GM12878 (cell line): ENCODE measurements at regions of chr4 and their contacts with region 1.

Region 1: GRCh38 chr4:106369456-106370060 is 980 bp upstream of the GIMD1 start:
- DNase-seq: peak; percentile 20
- ATAC-seq: peak; percentile 83
- H3K4me3 ChIP-seq: no peak overlapping the region
- H3K27ac ChIP-seq: no peak overlapping the region
- H3K4me1 ChIP-seq: no peaks in the 10 kb centered on the region
- H3K27me3 ChIP-seq: no peaks in the 10 kb centered on the region
- CTCF ChIP-seq: peak; percentile 50 to 58 (median 58)
- EP300 ChIP-seq: no peak
- POLR2A ChIP-seq: no peak
- RAD21 ChIP-seq: peak; percentile 69

Region 2: GRCh38 chr4:106266201-106266600 is 103.4 kb before region 1 on chr4:
- CTCF ChIA-PET with region 1: interaction called, 6 read pairs
- POLR2A ChIA-PET with region 1: no interaction called
- RAD21 ChIA-PET with region 1: interaction called, 4 read pairs
- SMC1A ChIA-PET with region 1: interaction called, 4 read pairs
- in situ Hi-C with region 1: no loop called
- intact Hi-C with region 1: loop called (anchors 1 kb)
- DNase-seq: peak; percentile 7
- ATAC-seq: peak; percentile 70
- H3K4me3 ChIP-seq: no peak overlapping the region
- H3K27ac ChIP-seq: no peak overlapping the region
- H3K4me1 ChIP-seq: no peaks in the 10 kb centered on the region
- H3K27me3 ChIP-seq: no peaks in the 10 kb centered on the region
- CTCF ChIP-seq: peak; percentile 47 to 60 (median 59); a peak in 5 of 6 replicates
- EP300 ChIP-seq: no peak
- POLR2A ChIP-seq: no peak
- RAD21 ChIP-seq: peak; percentile 83

Region 3: GRCh38 chr4:106502106-106502699 is 132.6 kb after region 1 on chr4:
- CTCF ChIA-PET with region 1: interaction called, 13 read pairs
- POLR2A ChIA-PET with region 1: no interaction called
- RAD21 ChIA-PET with region 1: no interaction called
- SMC1A ChIA-PET with region 1: interaction called, 5 read pairs
- in situ Hi-C with region 1: no loop called
- intact Hi-C with region 1: loop called (anchors 2 kb)
- DNase-seq: no peak
- ATAC-seq: peak; percentile 93
- H3K4me3 ChIP-seq: no peak overlapping the region
- H3K27ac ChIP-seq: no peak overlapping the region
- H3K4me1 ChIP-seq: no peaks in the 10 kb centered on the region
- H3K27me3 ChIP-seq: no peaks in the 10 kb centered on the region
- CTCF ChIP-seq: peak; percentile 60 to 76 (median 69); a peak in 5 of 6 replicates
- EP300 ChIP-seq: no peak
- POLR2A ChIP-seq: no peak
- RAD21 ChIP-seq: peak; percentile 77

Region 4: DNA sequence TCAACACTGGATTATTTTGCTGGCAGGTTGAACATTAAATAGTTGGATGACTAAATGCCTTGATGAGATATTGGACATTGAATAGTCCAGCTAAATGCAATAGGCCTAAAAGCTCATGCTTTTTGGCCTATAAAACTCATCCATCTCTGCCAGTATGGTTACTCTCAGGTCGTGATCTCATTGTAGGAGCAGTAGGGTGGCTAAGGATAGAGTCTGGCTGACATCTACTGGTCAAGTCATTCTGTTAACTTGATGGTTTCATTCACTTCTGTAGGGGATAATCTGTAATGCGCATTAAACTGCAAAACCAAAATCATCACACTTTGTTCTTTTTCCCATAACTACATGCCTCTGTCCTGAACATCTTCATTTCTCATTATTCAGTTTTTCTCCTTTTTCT is 439.5 kb after region 1 on chr4:
- CTCF ChIA-PET with region 1: no interaction called
- POLR2A ChIA-PET with region 1: interaction called, 3 read pairs
- RAD21 ChIA-PET with region 1: interaction called, 3 read pairs
- SMC1A ChIA-PET with region 1: no interaction called
- in situ Hi-C with region 1: no loop called
- intact Hi-C with region 1: loop called (anchors 1 kb)
- DNase-seq: no peak
- ATAC-seq: peak; percentile 50; the same call in 2 of the 3 replicates
- H3K4me3 ChIP-seq: no peak overlapping the region
- H3K27ac ChIP-seq: no peak overlapping the region
- H3K4me1 ChIP-seq: no peaks in the 10 kb centered on the region
- H3K27me3 ChIP-seq: no peaks in the 10 kb centered on the region; a peak in 1 of 4 replicates
- CTCF ChIP-seq: peak in 1 of 3 experiments; percentile 32; a peak in 1 of 6 replicates
- EP300 ChIP-seq: no peak
- POLR2A ChIP-seq: no peak
- RAD21 ChIP-seq: peak; percentile 46

Region 5: DNA sequence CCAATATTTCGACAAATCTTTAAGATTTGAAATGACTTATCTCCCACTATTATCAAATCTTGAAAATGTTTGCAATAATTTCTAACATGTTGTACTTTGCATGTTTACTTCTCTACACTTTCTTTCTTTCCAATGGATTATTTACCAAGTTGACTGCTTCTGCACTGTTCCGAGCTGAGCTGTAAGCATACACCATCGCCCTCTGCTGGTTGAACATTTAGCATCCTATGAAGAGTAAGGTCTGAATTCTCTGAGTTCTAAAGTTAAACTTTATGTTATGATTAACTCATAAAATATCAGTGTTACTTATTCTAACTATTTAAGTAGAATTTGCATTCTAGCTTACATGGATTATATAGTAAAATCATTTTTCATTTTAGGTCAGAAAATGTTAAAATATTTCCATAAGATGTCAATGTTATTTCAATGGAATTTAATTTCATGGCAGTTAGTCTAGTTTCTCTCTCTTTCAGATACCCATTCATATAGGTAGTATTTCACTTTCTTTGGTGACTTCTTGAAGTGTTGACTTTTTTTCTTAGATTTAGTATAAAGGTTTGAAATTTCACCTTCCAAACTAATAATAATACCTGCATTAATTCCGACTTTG is 529.2 kb after region 1 on chr4:
- CTCF ChIA-PET with region 1: interaction called, 33 read pairs
- POLR2A ChIA-PET with region 1: no interaction called
- RAD21 ChIA-PET with region 1: interaction called, 3 read pairs
- SMC1A ChIA-PET with region 1: interaction called, 12 read pairs
- in situ Hi-C with region 1: no loop called
- intact Hi-C with region 1: loop called (anchors 1 kb)
- DNase-seq: no peak
- ATAC-seq: peak; percentile 88
- H3K4me3 ChIP-seq: no peak overlapping the region
- H3K27ac ChIP-seq: no peak overlapping the region
- H3K4me1 ChIP-seq: no peaks in the 10 kb centered on the region
- H3K27me3 ChIP-seq: no peaks in the 10 kb centered on the region
- CTCF ChIP-seq: peak; percentile 63 to 75 (median 65)
- EP300 ChIP-seq: no peak
- POLR2A ChIP-seq: no peak
- RAD21 ChIP-seq: peak; percentile 64

Region 6: DNA sequence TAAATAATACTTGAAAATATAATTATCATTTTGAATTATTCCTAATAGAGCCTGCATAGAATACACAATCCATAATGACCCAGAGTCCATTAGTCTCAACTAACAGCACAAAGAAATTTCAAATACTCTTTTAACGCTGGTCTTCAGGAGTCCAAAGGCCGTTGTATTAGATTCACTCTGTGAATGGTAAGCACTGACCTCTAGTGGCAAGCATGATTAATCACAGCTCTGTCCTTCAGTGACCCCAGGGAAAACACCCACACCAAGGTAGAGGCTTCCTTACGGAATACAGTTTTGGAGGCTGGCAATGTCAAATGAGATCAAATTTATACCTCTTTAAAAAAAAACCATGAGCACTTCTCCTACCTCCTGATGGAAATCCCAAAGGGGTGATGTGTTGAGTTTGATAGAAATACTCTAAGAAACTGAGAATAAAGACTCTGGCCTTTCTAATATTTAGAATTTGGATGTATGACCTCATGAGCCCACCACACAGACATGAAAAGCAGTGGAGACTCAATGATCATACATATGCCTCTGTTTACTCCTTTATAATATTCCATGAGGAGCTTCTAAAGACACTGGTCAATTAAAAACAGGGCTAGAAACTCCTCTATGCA is 813.7 kb after region 1 on chr4:
- CTCF ChIA-PET with region 1: interaction called, 4 read pairs
- POLR2A ChIA-PET with region 1: no interaction called
- RAD21 ChIA-PET with region 1: interaction called, 4 read pairs
- SMC1A ChIA-PET with region 1: interaction called, 3 read pairs
- in situ Hi-C with region 1: no loop called
- intact Hi-C with region 1: loop called (anchors 5 kb)
- DNase-seq: peak; percentile 3
- ATAC-seq: peak; percentile 99
- H3K4me3 ChIP-seq: no peak overlapping the region
- H3K27ac ChIP-seq: no peak overlapping the region
- H3K4me1 ChIP-seq: no peaks in the 10 kb centered on the region
- H3K27me3 ChIP-seq: no peaks in the 10 kb centered on the region
- CTCF ChIP-seq: peak; percentile 73 to 79 (median 78)
- EP300 ChIP-seq: no peak
- POLR2A ChIP-seq: no peak
- RAD21 ChIP-seq: peak; percentile 82